ENCODE measurements at regions of chr6 and their contacts with region 1.

Region 1: DNA sequence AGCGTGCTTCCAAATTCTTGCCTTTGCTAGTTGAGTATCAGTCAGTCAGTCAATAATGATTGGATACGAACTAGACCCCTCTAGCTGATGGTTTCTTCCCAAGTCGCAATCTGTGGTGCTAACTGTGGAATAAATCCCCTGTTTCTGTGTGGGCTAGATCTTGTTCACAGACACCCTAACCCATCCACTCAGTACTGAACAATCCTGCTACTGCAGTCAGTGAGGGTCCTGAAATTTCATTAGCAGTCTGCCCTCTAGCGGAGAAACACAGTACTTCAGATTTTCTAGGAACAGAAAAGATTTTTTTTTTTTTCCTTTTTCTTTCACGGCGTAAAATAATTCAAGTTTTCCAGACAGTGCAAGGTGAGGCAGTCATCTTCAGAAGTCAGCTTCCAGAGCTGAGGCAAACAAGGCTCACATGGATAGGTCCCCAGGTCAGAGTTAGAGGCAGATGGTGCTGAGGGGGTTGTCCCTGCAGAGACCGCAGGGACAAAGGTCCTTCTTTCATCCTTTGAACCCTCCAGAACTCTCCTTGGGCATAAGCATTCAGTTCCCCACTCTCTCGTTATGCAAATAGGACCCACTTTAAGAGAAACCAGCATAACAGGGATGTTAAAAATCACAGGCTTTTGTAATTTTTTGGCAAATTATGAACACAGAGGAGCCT is 119.6 kb downstream of the SCML4 start:
- DNase-seq: peak; percentile 51
- H3K4me3 ChIP-seq: no peak overlapping the region
- H3K27ac ChIP-seq: no peak overlapping the region
- H3K4me1 ChIP-seq: no peaks in the 10 kb centered on the region
- H3K27me3 ChIP-seq: no peaks in the 10 kb centered on the region
- CTCF ChIP-seq: peak; percentile 82

Region 2: GRCh38 chr6:107132330-107132954 is 572.0 kb before region 1 on chr6:
- CTCF ChIA-PET with region 1: no interaction called
- POLR2A ChIA-PET with region 1: no interaction called
- intact Hi-C with region 1: loop called (anchors 1 kb)
- DNase-seq: peak; percentile 43
- H3K4me3 ChIP-seq: no peak overlapping the region
- H3K27ac ChIP-seq: no peak overlapping the region
- H3K4me1 ChIP-seq: no peaks in the 10 kb centered on the region
- H3K27me3 ChIP-seq: no peaks in the 10 kb centered on the region
- CTCF ChIP-seq: peak; percentile 59

Region 3: GRCh38 chr6:107342144-107342543 is 362.3 kb before region 1 on chr6:
- CTCF ChIA-PET with region 1: no interaction called
- POLR2A ChIA-PET with region 1: no interaction called
- intact Hi-C with region 1: no loop called
- DNase-seq: no peak
- H3K4me3 ChIP-seq: no peak overlapping the region
- H3K27ac ChIP-seq: no peak overlapping the region
- H3K4me1 ChIP-seq: peaks cover 25% of the 10 kb centered on the region
- H3K27me3 ChIP-seq: no peaks in the 10 kb centered on the region
- CTCF ChIP-seq: no peak

Measured in A673 (cell line).